Psoas muscle (tissue), 8 donors: ENCODE measurements at regions of chr20 and their contacts with region 1.

Region 1: GRCh38 chr20:5933802-5934436 is 16.4 kb downstream of the TRMT6 start:
- DNase-seq: no peak
- ATAC-seq: peak; percentile 51 to 86 (median 74)
- H3K4me3 ChIP-seq: no peak overlapping the region
- H3K27ac ChIP-seq: no peak overlapping the region
- H3K4me1 ChIP-seq: no peaks in the 10 kb centered on the region
- H3K27me3 ChIP-seq: no peaks in the 10 kb centered on the region
- CTCF ChIP-seq: peak; percentile 38

Region 2: DNA sequence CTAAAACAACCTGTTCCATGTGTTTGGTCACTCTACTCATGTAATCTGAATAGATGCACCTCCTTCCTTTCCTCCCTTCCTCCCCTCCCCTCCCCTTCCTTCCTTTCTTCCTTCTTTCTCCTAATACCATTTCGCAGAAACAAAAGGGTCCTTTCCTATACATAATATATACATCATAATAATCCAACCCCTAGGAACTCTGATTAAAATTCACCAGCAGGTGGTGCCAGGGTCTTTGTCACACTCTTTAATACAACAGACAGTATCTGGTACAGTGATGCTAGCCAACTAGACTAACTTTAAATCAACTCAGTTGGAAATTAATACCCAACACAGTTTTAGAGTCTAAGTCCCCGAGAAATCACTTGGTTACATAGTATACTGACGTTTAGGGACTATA is 364.9 kb before region 1 on chr20:
- intact Hi-C with region 1: loop called in 1 of 2 experiments (anchors 10 kb)
- DNase-seq: no peak
- ATAC-seq: peak in 1 of 4 donors; percentile 75
- H3K4me3 ChIP-seq: no peak overlapping the region
- H3K27ac ChIP-seq: no peak overlapping the region
- H3K4me1 ChIP-seq: no peaks in the 10 kb centered on the region
- H3K27me3 ChIP-seq: no peaks in the 10 kb centered on the region
- CTCF ChIP-seq: peak; percentile 49

Region 3: DNA sequence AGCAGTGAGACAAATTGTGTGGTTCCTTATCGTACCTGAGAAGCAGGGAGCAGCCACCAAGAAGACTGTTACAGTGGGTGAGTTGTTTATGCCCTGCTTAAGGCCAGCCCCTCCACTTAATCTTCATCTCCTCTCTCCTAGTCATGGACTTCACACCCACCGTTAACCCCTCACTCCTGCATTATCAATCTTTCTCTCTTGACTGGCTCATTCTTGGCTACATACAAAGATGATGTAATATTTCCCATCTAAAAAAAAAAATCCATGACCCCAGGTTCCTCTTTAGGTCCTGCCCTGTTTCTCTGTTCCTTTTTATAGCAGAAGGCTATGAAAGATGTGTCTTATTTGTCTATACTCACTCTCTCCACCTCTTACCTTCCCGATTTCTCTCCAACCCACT is 111.3 kb before region 1 on chr20:
- intact Hi-C with region 1: loop called in 1 of 2 experiments (anchors 10 kb)
- DNase-seq: no peak
- ATAC-seq: peak in 1 of 4 donors; percentile 3
- H3K4me3 ChIP-seq: no peak overlapping the region
- H3K27ac ChIP-seq: no peak overlapping the region
- H3K4me1 ChIP-seq: peaks cover 12% of the 10 kb centered on the region
- H3K27me3 ChIP-seq: no peaks in the 10 kb centered on the region
- CTCF ChIP-seq: no peak

Region 4: DNA sequence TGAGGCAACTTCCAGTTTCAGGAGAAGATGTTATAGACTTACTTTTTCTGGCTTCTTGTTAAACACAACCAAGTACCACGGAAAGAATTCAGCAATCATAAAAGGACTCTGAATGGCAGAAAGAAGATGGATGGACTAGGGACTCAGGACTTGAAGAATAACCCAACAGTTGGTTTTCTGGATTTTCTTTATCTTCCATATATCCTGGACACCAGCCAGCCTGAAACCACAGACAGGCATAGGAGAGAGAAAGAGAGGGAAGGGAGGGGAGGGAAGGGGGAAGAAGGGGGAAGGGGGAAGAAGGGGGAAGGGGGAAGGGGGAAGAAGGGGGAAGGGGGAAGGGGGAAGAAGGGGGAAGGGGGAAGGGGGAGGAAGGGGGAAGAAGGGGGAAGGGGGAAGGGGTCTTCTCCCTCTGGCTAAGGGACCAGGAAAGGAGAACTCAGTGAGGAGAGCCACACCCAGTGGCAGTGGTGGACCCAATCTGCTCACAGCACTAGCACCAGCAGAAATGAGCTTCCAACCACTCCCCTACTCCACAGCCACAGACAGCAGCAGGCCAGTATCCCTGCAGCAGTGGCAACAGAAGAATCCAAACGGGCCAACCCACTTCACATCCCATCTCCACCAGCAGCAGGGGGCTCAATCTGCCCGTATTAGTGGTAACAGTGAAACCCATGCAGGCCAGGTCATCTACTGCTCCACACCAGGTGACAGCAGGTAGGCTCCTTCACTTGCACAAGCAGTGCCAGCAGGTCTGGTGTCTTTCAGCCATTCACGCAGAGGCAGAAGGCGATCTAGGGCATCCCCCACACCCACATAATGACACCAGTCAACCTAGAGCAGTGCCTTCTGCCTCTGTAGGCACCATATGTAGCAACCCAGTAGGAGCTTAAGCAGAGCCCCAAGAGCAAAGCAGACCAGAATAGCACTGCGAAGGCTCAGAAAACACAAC is 62.2 kb before region 1 on chr20:
- intact Hi-C with region 1: no loop called
- DNase-seq: no peak
- ATAC-seq: no peak
- H3K4me3 ChIP-seq: no peak overlapping the region
- H3K27ac ChIP-seq: no peak overlapping the region
- H3K4me1 ChIP-seq: no peaks in the 10 kb centered on the region
- H3K27me3 ChIP-seq: no peaks in the 10 kb centered on the region
- CTCF ChIP-seq: no peak

Region 5: GRCh38 chr20:5886788-5887187 is 47.1 kb before region 1 on chr20:
- intact Hi-C with region 1: no loop called
- DNase-seq: peak; percentile 56 to 70
- ATAC-seq: peak; percentile 82 to 86 (median 84)
- H3K4me3 ChIP-seq: no peak overlapping the region
- H3K27ac ChIP-seq: peak overlapping the region; percentile 92
- H3K4me1 ChIP-seq: peaks cover 29% of the 10 kb centered on the region
- H3K27me3 ChIP-seq: no peaks in the 10 kb centered on the region
- CTCF ChIP-seq: no peak